ENCODE measurements at regions of chr20 and their contacts with region 1.

Region 1: GRCh38 chr20:35994994-35995453 is 26.6 kb downstream of the CNBD2 start:
- DNase-seq: peak; percentile 48 to 65 (median 65)
- H3K4me3 ChIP-seq: no peak overlapping the region
- H3K4me3 Mint-ChIP-seq: no peak overlapping the region
- H3K27ac ChIP-seq: no peak overlapping the region
- H3K27ac Mint-ChIP-seq: peak overlapping the region in 1 of 7 donors; percentile 17
- H3K4me1 ChIP-seq: peaks cover 4 to 9% of the 10 kb centered on the region in 2 donors
- H3K4me1 Mint-ChIP-seq: peaks cover 11% of the 10 kb centered on the region
- H3K27me3 ChIP-seq: peaks cover 0 to 5% of the 10 kb centered on the region in 2 donors
- H3K27me3 Mint-ChIP-seq: peaks cover 2 to 8% (median 8%) of the 10 kb centered on the region in 3 donors
- CTCF ChIP-seq: peak; percentile 93

Region 2: DNA sequence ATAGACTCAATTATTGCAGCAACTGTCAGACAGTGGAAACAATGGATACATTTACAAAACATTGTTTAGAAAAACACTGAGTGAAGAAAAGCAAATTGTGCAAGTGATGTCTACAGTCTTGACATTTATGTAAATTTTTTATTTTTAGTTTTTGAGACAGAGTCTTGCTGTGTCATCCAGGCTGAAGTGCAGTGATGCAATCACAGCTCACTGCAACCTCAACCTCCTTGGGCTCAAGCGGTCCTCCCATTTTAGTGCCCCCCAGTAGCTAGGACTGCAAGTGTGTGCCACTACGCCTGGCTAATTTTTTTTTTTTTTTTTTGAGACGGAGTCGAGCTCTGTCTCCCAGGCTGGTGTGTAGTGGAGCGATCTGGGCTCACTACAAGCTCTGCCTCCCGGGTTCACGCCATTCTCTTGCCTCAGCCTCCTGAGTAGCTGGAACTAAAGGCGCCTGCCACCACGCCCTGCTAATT is 16.9 kb before region 1 on chr20:
- intact Hi-C with region 1: no loop called
- DNase-seq: peak; percentile 63 to 84 (median 66)
- H3K4me3 ChIP-seq: peak overlapping the region in 2 of 3 experiments; percentile 14 to 55
- H3K4me3 Mint-ChIP-seq: peak overlapping the region; percentile 66 to 80
- H3K27ac ChIP-seq: peak overlapping the region; percentile 65 to 69
- H3K27ac Mint-ChIP-seq: peak overlapping the region; percentile 88 to 95 (median 93)
- H3K4me1 ChIP-seq: peaks cover 39 to 41% of the 10 kb centered on the region in 2 donors
- H3K4me1 Mint-ChIP-seq: peaks cover 40% of the 10 kb centered on the region
- H3K27me3 ChIP-seq: no peaks in the 10 kb centered on the region
- H3K27me3 Mint-ChIP-seq: peaks cover 0 to 5% (median 4%) of the 10 kb centered on the region in 3 donors
- CTCF ChIP-seq: no peak

Region 3: GRCh38 chr20:36064658-36065426 is 69.8 kb after region 1 on chr20:
- intact Hi-C with region 1: loop called in 1 of 2 experiments (anchors 10 kb)
- DNase-seq: peak; percentile 88 to 90 (median 90)
- H3K4me3 ChIP-seq: peak overlapping the region; percentile 51 to 85 (median 67)
- H3K4me3 Mint-ChIP-seq: peak overlapping the region; percentile 83 to 92
- H3K27ac ChIP-seq: peak overlapping the region; percentile 68 to 80
- H3K27ac Mint-ChIP-seq: peak overlapping the region; percentile 76 to 91 (median 88)
- H3K4me1 ChIP-seq: peaks cover 16 to 17% of the 10 kb centered on the region in 2 donors
- H3K4me1 Mint-ChIP-seq: peaks cover 15% of the 10 kb centered on the region
- H3K27me3 ChIP-seq: peaks cover 0 to 5% of the 10 kb centered on the region in 2 donors
- H3K27me3 Mint-ChIP-seq: peaks cover 6 to 11% (median 7%) of the 10 kb centered on the region in 3 donors
- CTCF ChIP-seq: no peak

Region 4: GRCh38 chr20:36132802-36133211 is 137.8 kb after region 1 on chr20:
- intact Hi-C with region 1: loop called (anchors 1 to 2 kb)
- DNase-seq: no peak
- H3K4me3 ChIP-seq: no peak overlapping the region
- H3K4me3 Mint-ChIP-seq: no peak overlapping the region
- H3K27ac ChIP-seq: no peak overlapping the region
- H3K27ac Mint-ChIP-seq: peak overlapping the region in 1 of 7 donors; percentile 54
- H3K4me1 ChIP-seq: no peaks in the 10 kb centered on the region
- H3K4me1 Mint-ChIP-seq: peaks cover 9% of the 10 kb centered on the region
- H3K27me3 ChIP-seq: no peaks in the 10 kb centered on the region
- H3K27me3 Mint-ChIP-seq: peaks cover 0 to 8% (median 4%) of the 10 kb centered on the region in 3 donors
- CTCF ChIP-seq: no peak

Region 5: DNA sequence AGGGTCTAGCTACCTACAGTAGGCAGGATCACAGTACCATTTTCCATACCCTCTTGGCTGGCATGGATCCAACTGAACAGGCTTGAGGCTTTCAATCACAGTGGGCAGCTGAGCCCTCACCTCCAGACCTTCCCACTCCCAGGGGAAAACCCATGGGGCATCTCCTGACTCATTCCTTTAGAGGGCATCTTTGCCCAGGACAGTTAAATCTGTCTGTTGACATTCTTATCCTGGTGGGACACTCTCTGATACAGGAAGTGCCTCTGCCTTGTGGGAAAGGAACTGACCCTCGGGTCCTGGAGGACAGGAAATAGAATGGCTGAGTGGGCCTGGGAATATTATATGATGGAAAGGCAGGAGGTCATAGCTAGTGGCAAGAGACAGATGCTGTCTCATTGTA is 149.3 kb after region 1 on chr20:
- intact Hi-C with region 1: loop called in 1 of 2 experiments (anchors 2 kb)
- DNase-seq: no peak
- H3K4me3 ChIP-seq: no peak overlapping the region
- H3K4me3 Mint-ChIP-seq: no peak overlapping the region
- H3K27ac ChIP-seq: no peak overlapping the region
- H3K27ac Mint-ChIP-seq: no peak overlapping the region
- H3K4me1 ChIP-seq: no peaks in the 10 kb centered on the region
- H3K4me1 Mint-ChIP-seq: no peaks in the 10 kb centered on the region
- H3K27me3 ChIP-seq: no peaks in the 10 kb centered on the region
- H3K27me3 Mint-ChIP-seq: peaks cover 8 to 9% (median 9%) of the 10 kb centered on the region in 3 donors
- CTCF ChIP-seq: no peak

Measured in CD14-positive monocyte (primary cell).